Activated CD4-positive, alpha-beta T cell treated with anti-CD3 and anti-CD28 coated beads for 36 hours (primary cell): ENCODE measurements at regions of chr4 and their contacts with region 1.

Region 1: GRCh38 chr4:124262211-124263179 is 450.0 kb downstream of the ANKRD50 start:
- DNase-seq: peak; percentile 60
- ATAC-seq: peak; percentile 58
- H3K4me3 Mint-ChIP-seq: no peak overlapping the region
- H3K27ac Mint-ChIP-seq: no peak overlapping the region
- H3K4me1 Mint-ChIP-seq: no peaks in the 10 kb centered on the region
- H3K27me3 Mint-ChIP-seq: peaks cover 2% of the 10 kb centered on the region

Region 2: GRCh38 chr4:122758033-122758432 is 1504.5 kb before region 1 on chr4:
- CTCF ChIA-PET with region 1: no interaction called
- POLR2A ChIA-PET with region 1: no interaction called
- intact Hi-C with region 1: loop called in 1 of 2 experiments (anchors 2 kb)
- DNase-seq: no peak
- ATAC-seq: peak; percentile 33
- H3K4me3 Mint-ChIP-seq: no peak overlapping the region
- H3K27ac Mint-ChIP-seq: no peak overlapping the region
- H3K4me1 Mint-ChIP-seq: peaks cover 16% of the 10 kb centered on the region
- H3K27me3 Mint-ChIP-seq: peaks cover 12% of the 10 kb centered on the region

Region 3: GRCh38 chr4:123102897-123103471 is 1159.5 kb before region 1 on chr4:
- CTCF ChIA-PET with region 1: interaction called, 3 read pairs
- POLR2A ChIA-PET with region 1: no interaction called
- intact Hi-C with region 1: loop called (anchors 2 to 5 kb)
- DNase-seq: no peak
- ATAC-seq: peak; percentile 68
- H3K4me3 Mint-ChIP-seq: no peak overlapping the region
- H3K27ac Mint-ChIP-seq: no peak overlapping the region
- H3K4me1 Mint-ChIP-seq: no peaks in the 10 kb centered on the region
- H3K27me3 Mint-ChIP-seq: no peaks in the 10 kb centered on the region

Region 4: DNA sequence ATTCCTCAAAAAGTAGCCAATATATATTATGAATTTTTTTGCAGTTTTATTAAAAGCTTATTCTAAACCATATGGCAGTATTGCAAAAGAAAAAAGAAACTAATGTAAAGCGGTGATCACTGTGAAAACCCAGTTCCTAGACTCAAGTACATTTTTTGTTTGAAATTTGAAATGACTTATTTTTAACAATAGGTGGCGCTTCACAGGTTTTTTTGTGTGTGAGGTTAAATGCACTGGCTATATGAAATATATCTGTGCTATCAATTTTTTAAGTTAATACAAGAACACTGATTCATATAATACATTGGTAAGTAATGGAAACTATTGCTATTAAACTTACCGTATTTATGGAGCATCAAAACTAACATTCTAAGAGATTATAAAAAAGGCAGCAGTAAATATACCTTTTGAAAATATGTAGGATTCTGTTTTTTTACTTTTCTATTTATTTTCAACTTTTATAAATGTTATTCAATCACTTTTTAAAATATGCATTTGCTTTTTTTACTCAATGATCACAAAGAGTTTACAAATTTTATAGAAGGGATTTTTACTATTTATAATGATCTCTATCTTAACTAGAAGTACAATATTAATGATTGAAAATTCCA is 871.5 kb before region 1 on chr4:
- CTCF ChIA-PET with region 1: no interaction called
- POLR2A ChIA-PET with region 1: no interaction called
- intact Hi-C with region 1: loop called (anchors 2 to 5 kb)
- DNase-seq: no peak
- ATAC-seq: no peak
- H3K4me3 Mint-ChIP-seq: no peak overlapping the region
- H3K27ac Mint-ChIP-seq: no peak overlapping the region
- H3K4me1 Mint-ChIP-seq: peaks cover 8% of the 10 kb centered on the region
- H3K27me3 Mint-ChIP-seq: no peaks in the 10 kb centered on the region

Region 5: DNA sequence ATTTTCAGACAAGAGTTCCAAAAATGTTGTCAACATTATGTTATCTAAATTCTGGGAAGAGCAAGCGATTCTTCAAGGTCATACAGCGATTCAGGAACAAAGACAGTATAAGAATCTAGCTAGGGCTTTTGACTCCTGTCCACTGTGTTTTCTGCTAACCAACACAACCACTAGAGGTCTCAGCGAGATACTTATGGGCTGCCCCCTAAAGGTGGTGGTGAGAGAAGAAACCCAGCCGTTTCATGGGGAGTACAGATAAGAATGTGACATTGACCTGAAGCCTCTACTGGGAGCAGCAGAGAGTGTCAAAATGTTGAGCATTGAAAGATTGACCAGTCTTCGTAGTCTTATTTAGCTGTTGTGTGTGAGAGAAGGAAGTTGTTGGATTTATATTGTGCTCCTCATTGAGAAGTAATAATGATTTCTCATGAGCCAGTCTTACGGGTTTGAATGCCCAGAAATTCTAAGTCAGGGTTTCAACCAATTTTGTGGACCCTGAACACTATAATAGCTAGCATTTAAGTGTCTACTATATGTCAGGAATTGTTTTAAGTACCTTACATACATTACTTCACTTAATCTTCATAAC is 697.6 kb before region 1 on chr4:
- CTCF ChIA-PET with region 1: interaction called, 3 read pairs
- POLR2A ChIA-PET with region 1: no interaction called
- intact Hi-C with region 1: loop called in 1 of 2 experiments (anchors 10 kb)
- DNase-seq: peak; percentile 64
- ATAC-seq: peak; percentile 100
- H3K4me3 Mint-ChIP-seq: no peak overlapping the region
- H3K27ac Mint-ChIP-seq: no peak overlapping the region
- H3K4me1 Mint-ChIP-seq: peaks cover 2% of the 10 kb centered on the region
- H3K27me3 Mint-ChIP-seq: peaks cover 9% of the 10 kb centered on the region

Region 6: DNA sequence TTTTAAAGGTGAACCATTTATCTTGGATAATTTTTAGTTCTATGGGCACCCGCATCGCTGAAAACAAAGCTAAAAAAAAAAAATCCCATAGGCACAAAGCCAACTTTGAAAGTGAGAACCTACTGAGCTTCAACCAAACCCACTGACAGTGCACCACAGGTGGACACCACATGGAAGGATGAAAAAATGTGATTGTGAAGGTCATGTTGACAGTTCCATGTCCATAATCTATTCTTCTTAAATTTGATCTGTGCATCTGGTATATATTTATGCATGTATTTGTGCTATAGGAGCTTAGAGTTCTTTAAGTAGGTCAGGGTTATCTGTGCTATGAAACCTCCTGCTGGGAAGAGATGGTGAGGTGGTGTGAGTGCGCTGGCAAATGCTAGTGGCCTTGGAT is 491.6 kb before region 1 on chr4:
- CTCF ChIA-PET with region 1: interaction called, 4 read pairs
- POLR2A ChIA-PET with region 1: no interaction called
- intact Hi-C with region 1: loop called (anchors 1 to 2 kb)
- DNase-seq: no peak
- ATAC-seq: no peak
- H3K4me3 Mint-ChIP-seq: no peak overlapping the region
- H3K27ac Mint-ChIP-seq: no peak overlapping the region
- H3K4me1 Mint-ChIP-seq: peaks cover under 1% of the 10 kb centered on the region
- H3K27me3 Mint-ChIP-seq: no peaks in the 10 kb centered on the region

Region 7: DNA sequence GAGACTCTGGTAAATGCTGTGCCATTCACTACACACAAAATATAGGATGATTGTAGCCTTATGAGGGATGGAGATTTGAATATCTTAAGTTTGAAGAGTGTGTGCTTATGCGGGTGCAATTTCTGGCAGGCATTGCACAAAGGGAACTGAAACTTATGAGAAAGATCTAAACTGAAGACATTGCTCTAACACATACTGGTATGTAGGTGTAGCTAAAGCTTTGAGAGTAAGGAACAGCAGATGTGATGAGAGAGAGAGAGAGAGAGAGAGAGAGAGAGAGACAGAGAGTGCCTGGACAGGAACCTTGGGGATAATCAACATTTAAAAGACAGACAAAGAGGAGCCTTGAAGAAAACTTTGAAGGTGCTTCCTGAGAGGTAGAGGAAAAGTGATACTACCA is 486.2 kb before region 1 on chr4:
- CTCF ChIA-PET with region 1: interaction called, 4 read pairs
- POLR2A ChIA-PET with region 1: no interaction called
- intact Hi-C with region 1: loop called (anchors 1 to 2 kb)
- DNase-seq: no peak
- ATAC-seq: peak; percentile 64
- H3K4me3 Mint-ChIP-seq: no peak overlapping the region
- H3K27ac Mint-ChIP-seq: no peak overlapping the region
- H3K4me1 Mint-ChIP-seq: peaks cover 7% of the 10 kb centered on the region
- H3K27me3 Mint-ChIP-seq: no peaks in the 10 kb centered on the region